Calu3 (cell line): ENCODE measurements at regions of chr2 and their contacts with region 1.

Region 1: GRCh38 chr2:120012771-120013596 is at the start of gene EPB41L5:
- DNase-seq: peak; percentile 93
- H3K4me3 Mint-ChIP-seq: peak within 1 kb of the TSS; percentile 84
- H3K27ac Mint-ChIP-seq: peak within 1 kb of the TSS; percentile 91
- H3K4me1 Mint-ChIP-seq: peaks cover 48% of the 10 kb centered on the region
- H3K27me3 Mint-ChIP-seq: no peaks in the 10 kb centered on the region
- CTCF ChIP-seq: no peak
- total RNA-seq, gene EPB41L5: 24.0 and 27.7 TPM in 2 replicates

Region 2: GRCh38 chr2:119759451-119760236 is 253.3 kb before region 1 on chr2 and contains the start of gene PTPN4:
- CTCF ChIA-PET with region 1: no interaction called
- intact Hi-C with region 1: loop called (anchors 10 kb)
- DNase-seq: peak; percentile 96
- H3K4me3 Mint-ChIP-seq: peak within 1 kb of the TSS; percentile 90
- H3K27ac Mint-ChIP-seq: peak within 1 kb of the TSS; percentile 91
- H3K4me1 Mint-ChIP-seq: peaks cover 9% of the 10 kb centered on the region
- H3K27me3 Mint-ChIP-seq: no peaks in the 10 kb centered on the region
- CTCF ChIP-seq: no peak
- total RNA-seq, gene PTPN4: 47.4 and 52.4 TPM in 2 replicates

Region 3: DNA sequence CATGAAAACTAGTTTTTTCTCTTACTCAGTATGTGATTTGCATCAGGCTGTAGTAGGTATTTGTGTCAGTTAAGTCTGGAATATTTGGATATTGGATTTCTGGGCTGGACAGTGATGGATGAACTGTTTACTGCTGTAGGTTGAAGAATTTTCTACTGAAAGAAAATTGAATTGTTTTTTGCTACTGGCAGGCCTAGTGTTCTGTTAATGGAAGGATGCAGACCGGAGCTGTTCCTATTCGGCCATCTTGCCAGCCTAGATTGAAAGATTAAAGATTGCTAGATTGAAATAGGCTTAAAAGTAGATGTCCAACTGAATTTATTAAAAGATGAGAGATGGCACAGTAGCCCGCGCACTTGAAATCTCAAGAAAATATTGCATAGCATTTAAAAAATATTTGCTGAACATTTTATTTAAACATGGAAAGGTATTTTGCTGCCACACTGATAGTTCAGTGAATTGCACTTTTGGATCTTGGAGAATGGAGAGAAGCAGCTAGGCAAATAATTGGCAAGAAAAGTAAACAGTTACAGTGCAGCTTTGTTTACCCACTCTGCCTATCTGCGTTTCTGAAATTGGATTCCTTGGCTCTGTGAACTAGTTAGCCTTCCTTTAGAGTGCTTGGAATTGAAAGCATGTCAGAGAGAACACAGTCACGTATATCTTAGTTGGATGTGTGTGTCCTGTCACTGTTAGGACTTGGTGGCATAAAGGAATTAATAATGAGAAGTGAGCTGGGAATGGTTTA is 54.0 kb after region 1 on chr2:
- CTCF ChIA-PET with region 1: no interaction called
- intact Hi-C with region 1: loop called (anchors 2 kb)
- DNase-seq: peak; percentile 34
- H3K4me3 Mint-ChIP-seq: peak overlapping the region; percentile 61
- H3K27ac Mint-ChIP-seq: peak overlapping the region; percentile 82
- H3K4me1 Mint-ChIP-seq: peaks cover 23% of the 10 kb centered on the region
- H3K27me3 Mint-ChIP-seq: no peaks in the 10 kb centered on the region
- CTCF ChIP-seq: no peak

Region 4: GRCh38 chr2:120108076-120108475 is 95.1 kb after region 1 on chr2:
- CTCF ChIA-PET with region 1: interaction called, 3 read pairs
- intact Hi-C with region 1: loop called (anchors 1 kb)
- DNase-seq: peak; percentile 11
- H3K4me3 Mint-ChIP-seq: no peak overlapping the region
- H3K27ac Mint-ChIP-seq: peak overlapping the region; percentile 2
- H3K4me1 Mint-ChIP-seq: peaks cover 28% of the 10 kb centered on the region
- H3K27me3 Mint-ChIP-seq: no peaks in the 10 kb centered on the region
- CTCF ChIP-seq: no peak

Region 5: GRCh38 chr2:120118471-120118870 is 105.5 kb after region 1 on chr2:
- CTCF ChIA-PET with region 1: no interaction called
- intact Hi-C with region 1: no loop called
- DNase-seq: no peak
- H3K4me3 Mint-ChIP-seq: no peak overlapping the region
- H3K27ac Mint-ChIP-seq: no peak overlapping the region
- H3K4me1 Mint-ChIP-seq: no peaks in the 10 kb centered on the region
- H3K27me3 Mint-ChIP-seq: no peaks in the 10 kb centered on the region
- CTCF ChIP-seq: no peak

Region 6: DNA sequence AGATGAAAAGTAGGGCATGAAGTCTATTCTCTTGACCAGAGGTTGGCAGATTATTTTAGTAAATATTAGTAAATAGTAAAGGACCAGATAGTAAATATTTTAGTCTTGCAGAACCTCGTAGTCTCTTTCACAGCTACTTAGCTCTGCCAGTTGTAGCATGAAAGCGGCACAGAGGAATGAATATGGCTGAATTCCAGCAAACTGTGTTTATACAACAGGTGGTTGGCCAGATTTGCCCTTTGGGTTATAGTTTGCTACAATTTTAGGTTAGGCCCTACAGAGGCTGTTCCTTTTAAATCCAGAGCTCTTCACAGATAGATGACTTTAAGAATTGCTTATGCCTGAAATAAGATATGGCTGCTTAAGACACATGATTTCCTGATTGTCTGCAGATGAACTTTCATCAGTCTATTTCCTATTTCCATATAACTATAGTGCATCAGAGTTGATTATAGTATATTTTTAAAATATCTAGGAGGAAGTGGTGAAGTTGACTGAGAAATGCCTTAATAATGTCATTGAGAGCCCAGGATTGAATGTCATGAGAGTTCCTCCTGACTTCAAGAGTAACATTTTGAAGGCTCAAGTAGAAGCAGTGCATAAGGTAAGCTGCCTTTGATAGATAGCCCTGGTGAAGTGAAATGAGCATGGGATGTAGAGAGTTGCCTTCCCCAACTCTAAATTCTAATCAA is 129.7 kb after region 1 on chr2:
- CTCF ChIA-PET with region 1: no interaction called
- intact Hi-C with region 1: no loop called
- DNase-seq: no peak
- H3K4me3 Mint-ChIP-seq: no peak overlapping the region
- H3K27ac Mint-ChIP-seq: no peak overlapping the region
- H3K4me1 Mint-ChIP-seq: no peaks in the 10 kb centered on the region
- H3K27me3 Mint-ChIP-seq: no peaks in the 10 kb centered on the region
- CTCF ChIP-seq: no peak